ENCODE measurements at regions of chr1 and their contacts with region 1.

Region 1: GRCh38 chr1:232767305-232768074 is 37.7 kb upstream of the MAP10 start:
- DNase-seq: peak in 1 of 2 donors; percentile 55
- ATAC-seq: peak; percentile 92
- H3K4me3 ChIP-seq: no peak overlapping the region
- H3K27ac ChIP-seq: peak overlapping the region in 1 of 2 donors; percentile 92
- H3K4me1 ChIP-seq: peaks cover 0 to 1% of the 10 kb centered on the region in 2 donors
- H3K27me3 ChIP-seq: no peaks in the 10 kb centered on the region

Region 2: DNA sequence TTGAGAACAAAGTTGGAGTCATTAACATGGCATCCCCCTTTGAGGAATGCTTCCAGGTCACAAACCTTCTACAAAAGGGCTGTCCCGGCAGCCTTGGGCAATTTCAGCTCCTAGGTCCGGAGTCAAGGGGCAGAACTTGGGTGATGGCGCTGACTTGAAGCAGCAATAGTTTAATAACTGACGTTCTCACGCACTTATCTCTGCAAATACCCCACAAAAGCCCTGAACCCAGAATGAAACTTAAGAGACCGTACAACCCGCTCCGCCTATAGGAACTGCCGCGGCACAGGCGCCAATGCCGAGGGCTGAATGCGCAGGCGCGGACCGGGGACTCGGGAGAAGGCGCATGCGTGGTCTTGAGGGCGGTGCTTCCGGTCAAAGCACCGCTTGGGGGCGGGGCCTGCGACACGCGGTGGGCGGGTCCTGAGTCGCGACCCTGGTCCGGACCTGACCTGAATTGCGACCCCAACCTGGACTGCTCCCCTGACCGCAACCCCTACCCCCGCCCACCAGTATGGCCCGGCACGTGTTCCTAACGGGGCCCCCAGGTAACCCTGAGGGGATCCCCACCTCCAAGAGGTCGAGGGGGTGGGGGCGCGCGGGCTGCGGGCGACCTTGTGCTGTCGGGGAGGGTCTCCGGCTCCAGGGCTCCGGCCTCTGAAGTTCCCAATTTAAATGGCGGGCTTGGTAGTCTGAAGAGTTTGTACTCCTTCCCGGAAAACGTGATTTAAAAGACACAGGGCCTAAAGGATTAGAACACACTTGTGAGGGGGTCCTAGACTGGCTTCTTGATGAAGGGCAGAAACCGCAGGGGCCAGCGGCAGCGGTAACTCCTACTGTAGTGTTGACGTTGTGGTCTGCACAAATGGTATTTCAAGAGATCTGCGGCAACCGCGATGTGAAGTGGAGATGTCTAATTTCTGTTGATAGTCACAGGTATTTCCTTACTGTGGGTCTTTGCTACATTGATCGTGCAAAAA is 183.0 kb after region 1 on chr1 and contains the start of gene NTPCR:
- intact Hi-C with region 1: loop called in 1 of 2 experiments (anchors 5 kb)
- DNase-seq: peak; percentile 95 to 99
- ATAC-seq: peak; percentile 96
- H3K4me3 ChIP-seq: peak within 1 kb of the TSS; percentile 67 to 73
- H3K27ac ChIP-seq: peak within 1 kb of the TSS in 1 of 2 donors; percentile 34
- H3K4me1 ChIP-seq: no peaks in the 10 kb centered on the region
- H3K27me3 ChIP-seq: no peaks in the 10 kb centered on the region
- total RNA-seq, gene NTPCR: 21.3 to 31.3 TPM